Gastrocnemius medialis (tissue), 4 donors: ENCODE measurements at regions of chr7 and their contacts with region 1.

Region 1: DNA sequence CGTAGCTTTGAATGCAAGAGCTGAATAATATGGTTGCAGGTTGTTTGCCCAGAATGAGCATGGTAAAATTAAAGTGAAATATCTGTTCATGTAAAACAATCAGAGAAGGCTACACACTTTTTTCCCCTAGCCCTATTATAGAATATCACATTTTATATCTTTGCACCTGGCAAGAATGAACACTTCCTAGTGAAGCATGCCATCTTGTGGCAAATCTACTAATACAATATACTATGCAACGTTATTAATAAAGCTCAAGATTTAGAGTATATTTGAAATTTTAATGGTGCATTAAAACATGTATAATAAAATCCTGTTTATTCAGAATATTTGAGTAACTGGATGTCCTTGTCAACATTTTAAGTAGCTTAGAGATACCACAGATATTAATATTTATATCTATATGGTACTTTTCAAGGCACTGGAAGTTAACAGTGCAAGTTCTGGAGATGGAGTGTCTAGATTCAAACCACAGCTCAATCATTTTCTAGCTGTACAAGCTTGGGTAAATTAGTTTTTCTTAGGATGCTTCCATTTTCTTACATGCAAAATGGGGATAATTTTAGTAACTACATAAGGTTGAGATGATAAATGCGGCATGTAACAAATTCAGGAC is 643.1 kb upstream of the SEMA3D start:
- DNase-seq: no peak
- ATAC-seq: no peak
- H3K4me3 ChIP-seq: no peak overlapping the region
- H3K27ac ChIP-seq: no peak overlapping the region
- H3K4me1 ChIP-seq: no peaks in the 10 kb centered on the region
- H3K27me3 ChIP-seq: no peaks in the 10 kb centered on the region
- CTCF ChIP-seq: no peak
- POLR2A ChIP-seq: no peak

Region 2: DNA sequence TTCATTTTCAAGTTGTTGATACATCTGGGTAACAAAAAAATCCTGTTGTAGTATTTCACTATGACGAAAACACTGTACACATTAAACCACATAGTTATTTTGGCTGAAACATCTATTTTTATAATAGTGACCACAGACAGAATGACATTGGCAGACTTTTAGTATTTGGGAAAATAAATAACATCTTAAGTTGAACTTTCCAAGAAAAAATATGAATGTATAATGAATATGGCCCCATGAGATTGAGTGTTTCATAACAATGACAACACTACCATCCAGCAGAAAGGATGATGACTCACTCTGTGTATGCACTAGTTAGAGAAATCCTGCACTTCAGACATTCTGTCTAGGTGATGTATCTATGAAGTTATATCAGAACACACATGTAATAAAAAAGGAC is 761.1 kb before region 1 on chr7:
- in situ Hi-C with region 1: loop called in 1 of 4 experiments (anchors 25 kb)
- intact Hi-C with region 1: no loop called
- DNase-seq: no peak
- ATAC-seq: peak in 1 of 2 donors; percentile 36
- H3K4me3 ChIP-seq: no peak overlapping the region
- H3K27ac ChIP-seq: no peak overlapping the region
- H3K4me1 ChIP-seq: no peaks in the 10 kb centered on the region
- H3K27me3 ChIP-seq: no peaks in the 10 kb centered on the region
- CTCF ChIP-seq: no peak
- POLR2A ChIP-seq: no peak

Region 3: GRCh38 chr7:85875398-85875797 is 45.5 kb after region 1 on chr7:
- in situ Hi-C with region 1: no loop called
- intact Hi-C with region 1: no loop called
- DNase-seq: no peak
- ATAC-seq: no peak
- H3K4me3 ChIP-seq: no peak overlapping the region
- H3K27ac ChIP-seq: no peak overlapping the region
- H3K4me1 ChIP-seq: no peaks in the 10 kb centered on the region
- H3K27me3 ChIP-seq: no peaks in the 10 kb centered on the region
- CTCF ChIP-seq: no peak
- POLR2A ChIP-seq: no peak

Region 4: DNA sequence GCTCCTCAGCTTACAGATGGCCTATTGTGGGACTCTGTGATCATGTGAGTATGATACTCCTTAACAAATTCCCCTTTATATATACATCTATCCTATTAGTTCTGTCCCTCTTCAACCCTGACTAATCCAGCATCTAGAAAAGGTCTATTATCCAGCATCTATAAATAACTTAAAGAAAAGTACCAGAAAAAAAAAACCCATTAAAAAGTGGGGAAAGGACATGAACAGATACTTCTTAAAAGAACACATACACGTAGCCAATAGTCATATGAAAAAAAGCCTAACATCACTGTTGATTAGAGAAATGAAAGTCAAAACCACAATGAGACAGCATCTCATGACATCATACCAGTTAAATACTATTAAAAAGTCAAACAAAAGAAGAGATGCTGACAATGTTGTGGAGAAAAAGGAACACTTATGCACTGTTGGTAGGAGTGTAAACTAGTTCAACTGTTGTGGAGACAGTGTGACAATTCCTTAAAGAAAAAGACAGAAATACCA is 264.3 kb after region 1 on chr7:
- in situ Hi-C with region 1: no loop called
- intact Hi-C with region 1: no loop called
- DNase-seq: no peak
- ATAC-seq: no peak
- H3K4me3 ChIP-seq: no peak overlapping the region
- H3K27ac ChIP-seq: no peak overlapping the region
- H3K4me1 ChIP-seq: no peaks in the 10 kb centered on the region
- H3K27me3 ChIP-seq: no peaks in the 10 kb centered on the region
- CTCF ChIP-seq: no peak
- POLR2A ChIP-seq: no peak